Left cardiac atrium (tissue), 4 donors: ENCODE measurements at regions of chr1 and their contacts with region 1.

Region 1: GRCh38 chr1:20493839-20494608 is 8.0 kb upstream of the CAMK2N1 start:
- DNase-seq: peak; percentile 78
- ATAC-seq: peak; percentile 88

Region 2: DNA sequence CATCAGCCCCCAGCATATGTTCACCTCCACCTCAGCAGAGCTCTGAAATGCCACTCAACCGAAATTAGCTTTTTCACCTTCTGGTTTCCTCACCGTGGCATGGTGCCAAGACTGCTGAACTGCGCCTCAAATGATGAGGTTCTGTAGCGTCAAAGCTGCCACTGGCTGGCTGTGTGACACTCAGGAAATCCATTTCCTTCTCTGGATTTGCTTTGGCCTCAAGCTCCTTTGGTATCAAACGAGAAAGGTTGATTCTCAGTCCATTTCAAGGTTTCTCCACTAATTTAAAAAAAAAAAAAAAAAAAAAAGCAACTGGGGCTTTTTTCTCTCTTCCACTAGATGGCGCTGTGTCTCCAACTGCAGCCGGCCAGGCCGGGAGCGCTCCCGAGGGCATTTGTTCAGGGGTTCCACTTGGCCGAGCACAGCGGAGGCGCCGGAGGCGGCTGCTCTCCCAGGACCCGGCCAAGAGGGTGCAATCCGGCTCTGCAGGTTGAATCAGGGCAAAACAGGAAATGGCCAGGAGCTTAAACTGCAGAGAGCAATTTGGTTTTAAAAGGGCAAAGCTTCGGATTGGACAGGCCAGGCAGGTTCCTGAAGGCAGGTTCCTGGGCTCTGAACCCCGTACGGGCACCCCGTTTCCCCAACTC is 281.2 kb before region 1 on chr1:
- intact Hi-C with region 1: loop called (anchors 1 to 5 kb)
- DNase-seq: peak; percentile 69
- ATAC-seq: peak; percentile 84 to 86

Region 3: GRCh38 chr1:20361806-20362640 is 132.0 kb before region 1 on chr1:
- intact Hi-C with region 1: loop called in 1 of 2 experiments (anchors 5 kb)
- DNase-seq: peak; percentile 61
- ATAC-seq: peak; percentile 16 to 50

Region 4: GRCh38 chr1:20376880-20377494 is 117.0 kb before region 1 on chr1:
- intact Hi-C with region 1: loop called (anchors 5 kb)
- DNase-seq: peak; percentile 37
- ATAC-seq: peak in 1 of 2 donors; percentile 62